Heart left ventricle (tissue), 16 donors: ENCODE measurements at regions of chr6 and their contacts with region 1.

Region 1: GRCh38 chr6:52419809-52420670 is at the start of gene EFHC1:
- DNase-seq: peak; percentile 98 to 99 (median 99)
- ATAC-seq: peak; percentile 95 to 97 (median 96)
- H3K4me3 ChIP-seq: peak within 1 kb of the TSS; percentile 60 to 90 (median 80)
- H3K27ac ChIP-seq: peak within 1 kb of the TSS; percentile 14 to 93 (median 88)
- H3K4me1 ChIP-seq: peaks cover 0 to 50% (median 27%) of the 10 kb centered on the region in 12 donors
- H3K27me3 ChIP-seq: no peaks in the 10 kb centered on the region
- CTCF ChIP-seq: no peak
- POLR2A ChIP-seq: peak in 1 of 2 donors; percentile 93
- total RNA-seq, gene EFHC1: 2.8 to 14.4 (median 5.2) TPM

Region 2: GRCh38 chr6:52276130-52276529 is 143.9 kb before region 1 on chr6:
- intact Hi-C with region 1: no loop called
- DNase-seq: no peak
- ATAC-seq: no peak
- H3K4me3 ChIP-seq: no peak overlapping the region
- H3K27ac ChIP-seq: no peak overlapping the region
- H3K4me1 ChIP-seq: peaks cover 0 to 3% (median 0%) of the 10 kb centered on the region in 12 donors
- H3K27me3 ChIP-seq: no peaks in the 10 kb centered on the region
- CTCF ChIP-seq: no peak
- POLR2A ChIP-seq: no peak

Region 3: GRCh38 chr6:52399511-52400312 is 20.3 kb before region 1 on chr6:
- intact Hi-C with region 1: no loop called
- DNase-seq: no peak
- ATAC-seq: peak in 3 of 4 donors; percentile 46 to 63 (median 54)
- H3K4me3 ChIP-seq: no peak overlapping the region
- H3K27ac ChIP-seq: no peak overlapping the region
- H3K4me1 ChIP-seq: peaks cover 0 to 17% (median 0%) of the 10 kb centered on the region in 12 donors
- H3K27me3 ChIP-seq: no peaks in the 10 kb centered on the region
- CTCF ChIP-seq: peak; percentile 68 to 84 (median 76)
- POLR2A ChIP-seq: no peak

Region 4: DNA sequence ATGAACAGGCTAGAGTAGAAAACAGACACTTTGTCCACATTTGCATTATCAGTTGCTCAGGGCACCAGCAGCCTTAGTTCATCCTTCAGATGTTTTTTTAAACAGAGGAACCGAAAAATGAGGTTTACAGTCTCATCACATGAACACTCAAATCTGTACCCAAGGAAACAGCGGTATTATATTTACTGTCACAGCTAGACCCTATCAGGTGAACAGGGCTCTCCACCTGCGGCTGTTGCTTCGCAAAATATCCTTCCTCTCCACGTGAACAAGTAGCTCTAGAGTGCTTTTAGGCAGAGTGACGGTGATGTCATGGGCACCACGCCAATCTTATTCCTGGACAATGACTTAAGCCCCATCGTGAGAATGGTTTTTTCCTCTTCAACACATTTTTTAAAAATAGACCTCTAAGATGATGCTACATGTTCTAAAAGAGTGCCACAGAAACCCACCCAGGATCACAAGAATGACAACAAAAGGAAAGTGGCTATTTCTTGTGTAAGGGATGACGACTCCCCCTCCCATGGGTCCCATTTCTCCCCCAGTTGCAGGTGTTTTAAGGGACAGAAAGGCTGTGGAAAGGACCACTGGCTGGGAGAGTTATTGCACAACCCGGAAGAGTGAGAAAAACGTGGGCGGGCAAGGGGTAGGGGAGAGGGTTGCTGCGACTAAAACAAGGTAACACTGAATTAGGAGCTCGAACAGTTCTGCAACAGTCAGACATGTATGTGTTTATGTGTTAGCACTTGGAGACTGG is 77.8 kb after region 1 on chr6:
- intact Hi-C with region 1: loop called (anchors 1 to 5 kb)
- DNase-seq: peak in 4 of 5 donors; percentile 69 to 79 (median 70)
- ATAC-seq: peak in 3 of 4 donors; percentile 27 to 49 (median 40)
- H3K4me3 ChIP-seq: no peak overlapping the region
- H3K27ac ChIP-seq: peak overlapping the region; percentile 57 to 97 (median 82)
- H3K4me1 ChIP-seq: peaks cover 0 to 57% (median 32%) of the 10 kb centered on the region in 12 donors
- H3K27me3 ChIP-seq: no peaks in the 10 kb centered on the region
- CTCF ChIP-seq: no peak
- POLR2A ChIP-seq: no peak

Region 5: GRCh38 chr6:52503848-52504781 is 84.1 kb after region 1 on chr6:
- intact Hi-C with region 1: loop called (anchors 1 to 5 kb)
- DNase-seq: peak; percentile 89 to 94 (median 92)
- ATAC-seq: peak; percentile 84 to 90 (median 86)
- H3K4me3 ChIP-seq: no peak overlapping the region
- H3K27ac ChIP-seq: peak overlapping the region; percentile 50 to 88 (median 78)
- H3K4me1 ChIP-seq: peaks cover 11 to 75% (median 47%) of the 10 kb centered on the region in 12 donors
- H3K27me3 ChIP-seq: no peaks in the 10 kb centered on the region
- CTCF ChIP-seq: no peak
- POLR2A ChIP-seq: no peak

Region 6: GRCh38 chr6:52522151-52522626 is 102.1 kb after region 1 on chr6:
- intact Hi-C with region 1: no loop called
- DNase-seq: peak in 1 of 5 donors; percentile 69
- ATAC-seq: peak; percentile 24 to 63 (median 43)
- H3K4me3 ChIP-seq: no peak overlapping the region
- H3K27ac ChIP-seq: peak overlapping the region in 11 of 12 donors; percentile 35 to 77 (median 56)
- H3K4me1 ChIP-seq: peaks cover 4 to 52% (median 35%) of the 10 kb centered on the region in 12 donors
- H3K27me3 ChIP-seq: no peaks in the 10 kb centered on the region
- CTCF ChIP-seq: peak in 1 of 12 donors; percentile 9
- POLR2A ChIP-seq: no peak

Region 7: GRCh38 chr6:52577022-52577777 is 157.2 kb after region 1 on chr6 and contains the start of gene TRAM2:
- intact Hi-C with region 1: loop called in 9 of 10 experiments (anchors 1 to 10 kb)
- DNase-seq: peak; percentile 87 to 95 (median 91)
- ATAC-seq: peak; percentile 63 to 91 (median 78)
- H3K4me3 ChIP-seq: peak within 1 kb of the TSS; percentile 50 to 98 (median 91)
- H3K27ac ChIP-seq: peak within 1 kb of the TSS; percentile 91 to 100 (median 99)
- H3K4me1 ChIP-seq: peaks cover 9 to 52% (median 44%) of the 10 kb centered on the region in 12 donors
- H3K27me3 ChIP-seq: no peaks in the 10 kb centered on the region
- CTCF ChIP-seq: peak in 5 of 12 donors; percentile 18 to 34 (median 27)
- POLR2A ChIP-seq: peak in 1 of 2 donors; percentile 41
- total RNA-seq, gene TRAM2: 9.8 to 19.0 (median 12.1) TPM

Region 8: GRCh38 chr6:52590152-52590931 is 170.3 kb after region 1 on chr6:
- intact Hi-C with region 1: loop called in 5 of 10 experiments (anchors 2 to 5 kb)
- DNase-seq: peak in 4 of 5 donors; percentile 37 to 72 (median 56)
- ATAC-seq: peak; percentile 45 to 71 (median 56)
- H3K4me3 ChIP-seq: no peak overlapping the region
- H3K27ac ChIP-seq: no peak overlapping the region
- H3K4me1 ChIP-seq: peaks cover 0 to 37% (median 22%) of the 10 kb centered on the region in 12 donors
- H3K27me3 ChIP-seq: no peaks in the 10 kb centered on the region
- CTCF ChIP-seq: peak in 9 of 12 donors; percentile 25 to 50 (median 30)
- POLR2A ChIP-seq: no peak

Region 9: DNA sequence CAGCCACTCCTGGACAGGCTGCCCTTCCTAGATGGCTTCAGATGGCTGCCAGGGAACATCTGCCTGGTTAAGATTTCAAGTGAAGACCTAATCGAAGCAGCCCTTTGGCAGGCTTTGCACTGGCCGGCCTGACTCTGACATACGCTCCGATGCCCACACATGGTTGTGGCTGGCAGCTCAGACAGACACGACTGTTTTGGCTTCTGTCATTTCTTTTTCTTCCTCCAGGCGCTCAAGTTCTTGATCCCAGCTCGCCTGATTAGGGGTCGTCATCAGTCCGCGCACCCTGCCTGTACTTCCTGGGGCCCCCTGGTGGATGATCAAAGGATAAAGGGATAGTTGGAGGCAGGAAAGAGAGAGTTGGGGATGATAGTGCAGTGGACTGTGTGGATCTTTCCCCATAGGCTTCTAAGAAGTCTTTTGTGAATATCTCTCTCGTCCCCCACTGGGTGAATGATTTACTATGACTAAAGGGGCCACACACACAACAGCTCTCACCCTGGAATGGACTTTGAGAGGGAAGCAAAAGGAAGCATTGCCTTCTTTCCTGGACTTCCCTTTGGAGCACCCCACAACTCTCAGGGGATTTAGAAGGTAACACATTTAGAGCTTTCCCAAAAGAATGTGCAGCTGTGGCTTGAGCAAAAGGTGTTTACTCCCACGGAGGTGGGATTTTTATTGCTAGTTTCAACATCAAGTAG is 178.2 kb after region 1 on chr6:
- intact Hi-C with region 1: loop called (anchors 1 to 5 kb)
- DNase-seq: peak; percentile 61 to 70 (median 67)
- ATAC-seq: peak; percentile 57 to 79 (median 68)
- H3K4me3 ChIP-seq: peak overlapping the region in 6 of 12 donors; percentile 20 to 50 (median 35)
- H3K27ac ChIP-seq: peak overlapping the region in 6 of 12 donors; percentile 8 to 56 (median 36)
- H3K4me1 ChIP-seq: peaks cover 0 to 51% (median 18%) of the 10 kb centered on the region in 12 donors
- H3K27me3 ChIP-seq: no peaks in the 10 kb centered on the region
- CTCF ChIP-seq: peak; percentile 44 to 77 (median 67)
- POLR2A ChIP-seq: no peak

Region 10: GRCh38 chr6:52995913-52996645 is 576.0 kb after region 1 on chr6:
- intact Hi-C with region 1: loop called in 1 of 10 experiments (anchors 2 kb)
- DNase-seq: peak in 4 of 5 donors; percentile 44 to 51 (median 45)
- ATAC-seq: peak in 2 of 4 donors; percentile 4 to 7
- H3K4me3 ChIP-seq: peak overlapping the region in 10 of 12 donors; percentile 26 to 80 (median 58)
- H3K27ac ChIP-seq: peak overlapping the region in 11 of 12 donors; percentile 58 to 98 (median 91)
- H3K4me1 ChIP-seq: peaks cover 0 to 25% (median 15%) of the 10 kb centered on the region in 12 donors
- H3K27me3 ChIP-seq: no peaks in the 10 kb centered on the region
- CTCF ChIP-seq: no peak
- POLR2A ChIP-seq: no peak